CD4-positive, alpha-beta T cell (primary cell): ENCODE measurements at regions of chr11 and their contacts with region 1.

Region 1: GRCh38 chr11:113773416-113774173 is at the start of gene ZW10:
- DNase-seq: peak; percentile 86 to 96 (median 91)
- ATAC-seq: peak; percentile 97
- H3K4me3 ChIP-seq: peak within 1 kb of the TSS; percentile 88
- H3K4me3 Mint-ChIP-seq: peak within 1 kb of the TSS; percentile 95
- H3K27ac ChIP-seq: peak within 1 kb of the TSS; percentile 40 to 42
- H3K27ac Mint-ChIP-seq: peak within 1 kb of the TSS; percentile 84
- H3K4me1 ChIP-seq: peaks cover 12% of the 10 kb centered on the region
- H3K4me1 Mint-ChIP-seq: peaks cover 31% of the 10 kb centered on the region
- H3K27me3 ChIP-seq: no peaks in the 10 kb centered on the region
- H3K27me3 Mint-ChIP-seq: no peaks in the 10 kb centered on the region
- CTCF ChIP-seq: peak; percentile 97
- total RNA-seq, gene ZW10: 2.0 to 2.2 TPM

Region 2: DNA sequence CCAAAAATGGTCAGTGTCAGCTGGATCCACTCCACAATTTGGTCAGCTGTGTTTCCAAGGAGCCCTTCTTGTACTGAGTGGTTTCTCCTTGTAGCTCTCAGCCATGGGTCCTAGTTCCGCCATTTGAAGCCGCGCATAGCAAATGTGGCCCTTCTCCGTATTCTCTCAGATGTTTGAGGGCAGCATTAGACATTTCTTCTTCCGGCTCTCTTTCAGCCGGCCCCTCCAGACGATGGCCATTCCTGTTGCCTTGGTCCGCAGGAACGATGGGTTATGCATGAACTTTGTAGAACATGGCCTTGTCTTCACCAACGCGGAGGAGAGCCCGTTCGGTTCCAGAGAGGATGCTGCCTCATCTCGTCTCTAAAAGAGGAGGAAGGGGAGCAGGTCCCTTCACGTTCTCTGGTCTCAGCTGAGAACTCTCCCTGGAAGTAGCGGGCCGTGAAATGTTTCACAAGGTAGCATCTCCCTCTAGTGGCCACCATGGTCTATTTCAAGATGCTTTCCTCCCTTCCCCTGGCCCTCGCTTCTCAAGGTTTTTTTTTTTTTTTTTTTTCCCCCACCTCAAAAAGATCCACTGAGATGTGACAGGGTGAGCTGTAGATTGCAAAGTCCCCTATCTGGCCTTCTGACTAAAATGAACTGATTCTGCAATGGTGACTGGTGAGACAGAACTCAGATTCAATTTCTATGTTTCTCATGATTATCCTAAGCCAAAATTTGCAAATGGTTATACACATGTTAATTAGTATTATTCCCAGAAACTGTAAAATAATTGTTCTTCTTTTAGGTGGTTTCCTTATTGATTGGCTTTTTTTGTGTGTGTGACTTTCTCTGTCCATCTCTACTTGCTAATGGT is 1493.1 kb before region 1 on chr11:
- CTCF ChIA-PET with region 1: interaction called, 3 read pairs
- POLR2A ChIA-PET with region 1: no interaction called
- intact Hi-C with region 1: loop called in 1 of 2 experiments (anchors 10 kb)
- DNase-seq: peak; percentile 38 to 90 (median 56)
- ATAC-seq: peak; percentile 90
- H3K4me3 ChIP-seq: peak overlapping the region; percentile 61
- H3K4me3 Mint-ChIP-seq: peak overlapping the region; percentile 92
- H3K27ac ChIP-seq: no peak overlapping the region
- H3K27ac Mint-ChIP-seq: peak overlapping the region; percentile 64
- H3K4me1 ChIP-seq: peaks cover 22% of the 10 kb centered on the region
- H3K4me1 Mint-ChIP-seq: peaks cover 17% of the 10 kb centered on the region
- H3K27me3 ChIP-seq: no peaks in the 10 kb centered on the region
- H3K27me3 Mint-ChIP-seq: no peaks in the 10 kb centered on the region
- CTCF ChIP-seq: peak; percentile 44

Region 3: GRCh38 chr11:113314389-113315301 is 458.9 kb before region 1 on chr11 and contains the start of gene TTC12:
- CTCF ChIA-PET with region 1: no interaction called
- POLR2A ChIA-PET with region 1: interaction called, 3 read pairs
- intact Hi-C with region 1: loop called (anchors 2 to 10 kb)
- DNase-seq: peak; percentile 86 to 95 (median 93)
- ATAC-seq: peak; percentile 98
- H3K4me3 ChIP-seq: peak within 1 kb of the TSS; percentile 60
- H3K4me3 Mint-ChIP-seq: peak within 1 kb of the TSS; percentile 93
- H3K27ac ChIP-seq: peak within 1 kb of the TSS; percentile 63 to 85
- H3K27ac Mint-ChIP-seq: peak within 1 kb of the TSS; percentile 88
- H3K4me1 ChIP-seq: peaks cover 30% of the 10 kb centered on the region
- H3K4me1 Mint-ChIP-seq: peaks cover 46% of the 10 kb centered on the region
- H3K27me3 ChIP-seq: no peaks in the 10 kb centered on the region
- H3K27me3 Mint-ChIP-seq: no peaks in the 10 kb centered on the region
- CTCF ChIP-seq: no peak
- total RNA-seq, gene TTC12: 26.5 to 34.5 TPM

Region 4: DNA sequence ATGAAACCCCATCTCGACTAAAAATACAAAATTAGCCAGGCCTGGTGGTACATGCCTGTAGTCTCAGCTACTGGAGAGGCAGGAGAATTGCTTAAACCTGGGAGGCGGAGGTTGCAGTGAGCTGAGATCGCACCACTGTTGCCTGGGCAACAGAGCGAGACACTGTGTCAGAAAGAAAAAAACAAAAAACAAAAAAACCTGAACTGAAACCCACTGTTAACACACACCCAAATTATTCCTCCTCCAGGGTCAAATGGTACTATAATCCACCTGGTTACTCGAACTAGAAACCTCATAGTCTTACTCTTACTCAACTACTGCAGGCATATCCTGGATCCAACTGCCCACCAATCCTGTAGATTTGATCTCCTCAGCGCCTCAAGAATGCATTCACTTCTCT is 66.2 kb after region 1 on chr11:
- CTCF ChIA-PET with region 1: no interaction called
- POLR2A ChIA-PET with region 1: no interaction called
- intact Hi-C with region 1: no loop called
- DNase-seq: no peak
- ATAC-seq: no peak
- H3K4me3 ChIP-seq: no peak overlapping the region
- H3K4me3 Mint-ChIP-seq: no peak overlapping the region
- H3K27ac ChIP-seq: no peak overlapping the region
- H3K27ac Mint-ChIP-seq: no peak overlapping the region
- H3K4me1 ChIP-seq: no peaks in the 10 kb centered on the region
- H3K4me1 Mint-ChIP-seq: no peaks in the 10 kb centered on the region
- H3K27me3 ChIP-seq: no peaks in the 10 kb centered on the region
- H3K27me3 Mint-ChIP-seq: no peaks in the 10 kb centered on the region
- CTCF ChIP-seq: no peak

Region 5: GRCh38 chr11:114400217-114400914 is 626.8 kb after region 1 on chr11 and contains the starts of genes C11orf71 and RBM7:
- CTCF ChIA-PET with region 1: no interaction called
- POLR2A ChIA-PET with region 1: no interaction called
- intact Hi-C with region 1: loop called in 1 of 2 experiments (anchors 5 kb)
- DNase-seq: peak; percentile 95 to 100 (median 98)
- ATAC-seq: peak; percentile 91
- H3K4me3 ChIP-seq: peak within 1 kb of the TSS; percentile 92
- H3K4me3 Mint-ChIP-seq: peak within 1 kb of the TSS; percentile 99
- H3K27ac ChIP-seq: peak within 1 kb of the TSS; percentile 93 to 96
- H3K27ac Mint-ChIP-seq: peak within 1 kb of the TSS; percentile 100
- H3K4me1 ChIP-seq: peaks cover 9% of the 10 kb centered on the region
- H3K4me1 Mint-ChIP-seq: peaks cover 63% of the 10 kb centered on the region
- H3K27me3 ChIP-seq: no peaks in the 10 kb centered on the region
- H3K27me3 Mint-ChIP-seq: no peaks in the 10 kb centered on the region
- CTCF ChIP-seq: peak; percentile 28
- total RNA-seq, gene C11orf71: 6.1 to 7.6 TPM
- total RNA-seq, gene RBM7: 76.1 to 81.9 TPM